Vagina (tissue), 2 donors: ENCODE measurements at regions of chr12 and their contacts with region 1.

Region 1: DNA sequence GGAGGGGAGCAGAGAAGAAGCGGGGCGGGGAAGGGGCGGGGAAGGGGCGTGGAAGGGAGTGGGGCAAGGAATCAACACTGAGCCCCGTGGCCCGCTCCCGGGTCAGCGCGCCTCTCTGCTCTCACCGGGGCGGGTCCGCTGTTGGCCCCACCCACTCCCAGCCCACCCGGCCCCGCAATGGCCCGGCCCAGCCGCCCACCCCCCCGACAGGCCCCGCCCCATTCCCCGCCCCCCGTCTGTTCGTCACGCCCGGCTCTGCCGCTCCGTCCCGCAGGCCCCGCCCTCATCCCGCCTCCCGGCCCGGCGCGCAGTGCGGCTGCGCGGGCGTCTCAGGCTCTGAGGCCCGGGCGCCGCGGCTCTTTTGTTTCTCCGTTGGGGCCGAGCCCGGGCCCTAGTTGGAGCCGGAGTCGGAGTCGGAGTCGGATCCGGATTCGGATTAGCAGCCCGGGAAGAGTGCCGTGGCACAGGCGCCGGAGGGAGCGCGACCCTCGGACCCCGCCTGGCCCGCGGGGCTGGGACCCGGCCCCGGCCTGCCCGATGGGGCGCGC is at the start of gene ULK1:
- DNase-seq: peak in 1 of 2 donors; percentile 95
- H3K4me3 ChIP-seq: peak within 1 kb of the TSS; percentile 77 to 85
- H3K27ac ChIP-seq: peak within 1 kb of the TSS; percentile 98
- H3K4me1 ChIP-seq: peaks cover 35% of the 10 kb centered on the region
- H3K27me3 ChIP-seq: no peaks in the 10 kb centered on the region
- CTCF ChIP-seq: no peak
- POLR2A ChIP-seq: peak; percentile 43 to 96
- total RNA-seq, gene ULK1: 33.1 TPM

Region 2: GRCh38 chr12:132489602-132490239 is 595.3 kb after region 1 on chr12 and contains the start of gene FBRSL1:
- intact Hi-C with region 1: loop called (anchors 5 kb)
- DNase-seq: no peak
- H3K4me3 ChIP-seq: peak within 1 kb of the TSS; percentile 90 to 92
- H3K27ac ChIP-seq: peak within 1 kb of the TSS; percentile 89
- H3K4me1 ChIP-seq: peaks cover 54% of the 10 kb centered on the region
- H3K27me3 ChIP-seq: no peaks in the 10 kb centered on the region
- CTCF ChIP-seq: no peak
- POLR2A ChIP-seq: peak in 1 of 2 donors; percentile 18
- total RNA-seq, gene FBRSL1: 11.0 TPM